Esophagus muscularis mucosa (tissue), 4 donors: ENCODE measurements at regions of chr14 and their contacts with region 1.

Region 1: GRCh38 chr14:55354500-55354899 is 57.1 kb downstream of the ATG14 start:
- DNase-seq: peak; percentile 87
- H3K4me3 ChIP-seq: no peak overlapping the region
- H3K27ac ChIP-seq: no peak overlapping the region
- H3K4me1 ChIP-seq: peaks cover 0 to 7% (median 3%) of the 10 kb centered on the region in 4 donors
- H3K27me3 ChIP-seq: no peaks in the 10 kb centered on the region
- CTCF ChIP-seq: peak; percentile 27 to 67 (median 32)
- EP300 ChIP-seq: no peak
- POLR2A ChIP-seq: no peak

Region 2: DNA sequence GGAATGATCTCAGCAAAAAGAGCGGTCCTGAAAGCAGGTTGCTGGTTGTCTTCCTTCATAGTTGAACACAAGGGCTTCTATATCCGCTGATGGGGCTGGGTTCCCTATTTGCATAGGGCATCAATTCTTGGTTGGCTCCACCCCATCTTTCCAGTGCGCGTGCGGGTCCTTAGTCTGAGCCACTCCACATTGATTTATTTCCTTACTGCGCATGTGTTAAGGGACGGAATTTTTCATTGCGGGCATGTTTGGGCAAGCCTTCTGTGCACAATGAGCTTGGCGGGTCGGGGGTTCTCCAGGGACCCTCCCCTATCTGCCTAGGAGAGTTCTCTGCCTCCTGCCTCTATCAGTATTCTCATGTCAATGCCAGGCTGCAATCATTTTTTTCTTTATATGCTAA is 141.9 kb before region 1 on chr14:
- intact Hi-C with region 1: loop called (anchors 5 kb)
- DNase-seq: no peak
- H3K4me3 ChIP-seq: no peak overlapping the region
- H3K27ac ChIP-seq: no peak overlapping the region
- H3K4me1 ChIP-seq: peaks cover 0 to 4% (median 0%) of the 10 kb centered on the region in 4 donors
- H3K27me3 ChIP-seq: no peaks in the 10 kb centered on the region
- CTCF ChIP-seq: no peak
- EP300 ChIP-seq: no peak
- POLR2A ChIP-seq: no peak

Region 3: DNA sequence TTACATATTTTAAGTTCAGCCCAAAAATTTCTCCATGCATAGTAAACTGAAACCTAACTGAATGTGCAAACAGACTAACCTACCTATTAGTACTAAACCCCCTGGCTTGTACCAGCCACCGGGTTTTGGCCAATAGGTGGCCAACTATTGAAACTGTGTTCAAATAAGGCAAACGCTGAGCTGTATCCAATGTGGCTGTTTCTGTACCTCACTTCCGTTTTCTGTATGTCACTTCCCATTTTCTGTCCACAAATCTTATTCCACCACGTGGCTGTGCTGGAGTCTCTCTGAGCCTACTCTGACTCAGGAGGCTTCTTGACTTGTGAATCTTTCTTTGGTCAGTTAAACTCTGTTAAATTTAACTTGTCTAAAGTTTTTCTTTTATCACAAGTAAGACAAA is 89.3 kb before region 1 on chr14:
- intact Hi-C with region 1: loop called (anchors 5 kb)
- DNase-seq: no peak
- H3K4me3 ChIP-seq: no peak overlapping the region
- H3K27ac ChIP-seq: no peak overlapping the region
- H3K4me1 ChIP-seq: peaks cover 0 to 12% (median 9%) of the 10 kb centered on the region in 4 donors
- H3K27me3 ChIP-seq: no peaks in the 10 kb centered on the region
- CTCF ChIP-seq: no peak
- EP300 ChIP-seq: no peak
- POLR2A ChIP-seq: no peak

Region 4: DNA sequence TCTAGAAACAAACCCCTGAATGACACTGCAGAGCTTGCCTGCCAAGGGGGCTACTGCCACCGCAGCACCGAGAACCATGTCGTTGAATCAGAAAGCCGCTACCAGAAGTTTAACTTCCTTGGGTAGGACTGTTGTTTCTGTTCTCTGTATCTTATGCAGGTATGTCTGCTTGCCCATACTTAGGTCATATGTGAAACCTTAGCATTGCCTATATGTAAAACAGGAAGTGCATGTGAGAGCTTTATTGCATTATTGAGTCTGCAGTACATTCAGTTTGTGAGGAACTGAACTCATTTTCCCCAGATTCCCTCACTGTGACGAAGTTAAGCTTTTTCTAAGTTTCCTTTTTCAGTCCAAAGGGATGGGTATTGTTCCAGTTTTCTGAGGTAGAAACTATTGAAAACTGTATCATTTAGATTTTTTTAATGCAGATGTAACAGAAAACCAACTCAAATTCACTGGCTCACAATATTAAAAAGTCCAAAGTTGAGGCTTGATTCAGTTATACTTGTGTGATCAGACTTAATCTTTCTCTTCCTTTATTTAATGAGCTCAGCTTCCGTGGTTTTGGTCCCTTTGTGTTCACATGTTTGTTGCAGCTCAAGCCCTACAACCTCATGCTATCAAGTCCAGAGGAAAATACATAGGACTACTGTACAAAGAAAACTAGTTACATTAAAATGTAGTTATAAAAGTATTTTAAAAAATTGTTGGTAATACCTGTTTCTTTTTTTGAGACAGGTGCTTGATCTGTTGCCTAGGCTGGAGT is 76.3 kb before region 1 on chr14:
- intact Hi-C with region 1: no loop called
- DNase-seq: no peak
- H3K4me3 ChIP-seq: no peak overlapping the region
- H3K27ac ChIP-seq: no peak overlapping the region
- H3K4me1 ChIP-seq: peaks cover 30 to 51% (median 35%) of the 10 kb centered on the region in 4 donors
- H3K27me3 ChIP-seq: no peaks in the 10 kb centered on the region
- CTCF ChIP-seq: no peak
- EP300 ChIP-seq: no peak
- POLR2A ChIP-seq: no peak